ENCODE measurements at regions of chr14 and their contacts with region 1.

Region 1: DNA sequence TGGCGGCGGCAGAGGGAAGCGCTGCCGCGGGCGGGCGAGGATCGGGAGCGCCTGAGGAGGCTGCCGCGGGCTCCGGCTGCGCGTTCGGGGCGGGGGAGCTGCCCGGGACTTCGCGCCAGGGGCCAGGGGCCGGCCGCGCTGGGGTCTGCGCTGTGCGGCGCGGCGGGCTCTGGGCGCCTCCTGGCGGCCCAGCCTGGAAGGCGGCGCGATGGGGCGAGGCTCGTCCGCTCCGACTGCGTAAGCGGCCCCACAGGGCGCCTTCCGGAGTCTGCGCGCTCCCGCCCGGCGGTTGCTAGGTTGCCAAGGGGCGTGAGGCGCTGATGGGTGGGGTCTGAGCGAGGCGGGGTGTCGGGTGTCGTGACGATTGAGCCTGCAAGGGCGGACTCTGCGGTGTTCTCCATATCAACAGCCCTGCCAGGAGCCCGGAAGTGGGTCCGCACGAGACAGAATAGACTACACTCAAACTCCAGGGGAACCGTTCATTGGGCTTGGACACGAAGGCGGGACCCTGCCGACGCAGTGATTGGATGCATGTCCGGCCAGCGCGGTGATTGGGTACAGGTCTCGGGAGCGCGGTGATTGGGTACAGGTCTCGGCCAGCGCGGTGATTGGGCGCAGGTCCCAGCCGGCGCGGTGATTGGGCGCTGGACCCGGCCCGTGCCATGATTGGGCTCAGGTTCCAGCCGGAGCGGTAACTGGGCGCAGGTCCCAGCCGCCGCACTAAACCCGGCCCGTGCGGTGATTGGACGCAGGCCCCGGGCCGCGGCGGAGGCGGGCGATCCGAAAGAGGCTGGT is at the start of gene TEDC1:
- DNase-seq: peak; percentile 98 to 100 (median 98)
- ATAC-seq: peak; percentile 66
- H3K4me3 ChIP-seq: peak within 1 kb of the TSS; percentile 97
- H3K4me3 Mint-ChIP-seq: peak within 1 kb of the TSS; percentile 89
- H3K27ac ChIP-seq: peak within 1 kb of the TSS; percentile 88 to 95
- H3K27ac Mint-ChIP-seq: peak within 1 kb of the TSS; percentile 97
- H3K4me1 ChIP-seq: peaks cover 51% of the 10 kb centered on the region
- H3K4me1 Mint-ChIP-seq: peaks cover 21% of the 10 kb centered on the region
- H3K27me3 ChIP-seq: no peaks in the 10 kb centered on the region
- H3K27me3 Mint-ChIP-seq: no peaks in the 10 kb centered on the region
- CTCF ChIP-seq: peak; percentile 61
- total RNA-seq, gene TEDC1: 102 to 108 TPM

Region 2: GRCh38 chr14:105065280-105066228 is 425.2 kb before region 1 on chr14 and contains the start of gene GPR132:
- CTCF ChIA-PET with region 1: no interaction called
- POLR2A ChIA-PET with region 1: interaction called, 8 read pairs
- intact Hi-C with region 1: loop called in 1 of 2 experiments (anchors 5 kb)
- DNase-seq: peak; percentile 81 to 99 (median 86)
- ATAC-seq: peak; percentile 87
- H3K4me3 ChIP-seq: peak within 1 kb of the TSS; percentile 82
- H3K4me3 Mint-ChIP-seq: peak within 1 kb of the TSS; percentile 100
- H3K27ac ChIP-seq: peak within 1 kb of the TSS; percentile 94 to 95
- H3K27ac Mint-ChIP-seq: peak within 1 kb of the TSS; percentile 91
- H3K4me1 ChIP-seq: peaks cover 98% of the 10 kb centered on the region
- H3K4me1 Mint-ChIP-seq: peaks cover 72% of the 10 kb centered on the region
- H3K27me3 ChIP-seq: no peaks in the 10 kb centered on the region
- H3K27me3 Mint-ChIP-seq: no peaks in the 10 kb centered on the region
- CTCF ChIP-seq: no peak
- total RNA-seq, gene GPR132: 64.4 to 66.7 TPM

Region 3: GRCh38 chr14:105314287-105315200 is 176.2 kb before region 1 on chr14 and contains the start of gene PACS2:
- CTCF ChIA-PET with region 1: interaction called, 4 read pairs
- POLR2A ChIA-PET with region 1: interaction called, 12 read pairs
- intact Hi-C with region 1: loop called in 1 of 2 experiments (anchors 2 kb)
- DNase-seq: peak; percentile 43 to 97 (median 77)
- ATAC-seq: peak; percentile 69
- H3K4me3 ChIP-seq: peak within 1 kb of the TSS; percentile 61
- H3K4me3 Mint-ChIP-seq: peak within 1 kb of the TSS; percentile 95
- H3K27ac ChIP-seq: peak within 1 kb of the TSS in 1 of 2 donors; percentile 31
- H3K27ac Mint-ChIP-seq: peak within 1 kb of the TSS; percentile 88
- H3K4me1 ChIP-seq: peaks cover 27% of the 10 kb centered on the region
- H3K4me1 Mint-ChIP-seq: peaks cover 22% of the 10 kb centered on the region
- H3K27me3 ChIP-seq: no peaks in the 10 kb centered on the region
- H3K27me3 Mint-ChIP-seq: no peaks in the 10 kb centered on the region
- CTCF ChIP-seq: no peak
- total RNA-seq, gene PACS2: 57.7 to 61.5 TPM

Region 4: DNA sequence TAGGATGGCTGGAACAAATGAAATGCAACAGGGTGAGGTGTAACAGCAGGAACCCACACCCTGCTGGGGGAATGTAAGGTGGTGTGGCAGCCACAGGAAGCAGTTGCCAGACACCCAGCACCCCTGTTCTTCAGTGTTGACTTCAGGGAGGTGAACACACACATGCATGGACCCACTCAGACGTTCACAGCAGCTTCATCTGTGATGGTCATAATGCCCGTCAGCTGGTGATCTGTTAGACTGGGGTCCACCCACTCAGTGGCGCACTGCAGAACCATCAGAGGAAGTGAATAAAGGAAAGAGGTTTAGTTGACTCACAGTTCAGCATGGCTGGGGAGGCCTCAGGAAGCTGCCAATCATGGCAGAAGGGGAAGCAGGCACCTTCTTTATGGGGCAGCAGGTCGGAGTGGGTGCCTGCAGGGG is 115.1 kb before region 1 on chr14:
- CTCF ChIA-PET with region 1: interaction called, 40 read pairs
- POLR2A ChIA-PET with region 1: interaction called, 30 read pairs
- intact Hi-C with region 1: loop called in 1 of 2 experiments (anchors 1 kb)
- DNase-seq: peak in 4 of 14 experiments; percentile 8 to 53 (median 34)
- ATAC-seq: peak; percentile 16
- H3K4me3 ChIP-seq: no peak overlapping the region
- H3K4me3 Mint-ChIP-seq: no peak overlapping the region
- H3K27ac ChIP-seq: no peak overlapping the region
- H3K27ac Mint-ChIP-seq: no peak overlapping the region
- H3K4me1 ChIP-seq: peaks cover 14% of the 10 kb centered on the region
- H3K4me1 Mint-ChIP-seq: peaks cover 14% of the 10 kb centered on the region
- H3K27me3 ChIP-seq: no peaks in the 10 kb centered on the region
- H3K27me3 Mint-ChIP-seq: no peaks in the 10 kb centered on the region
- CTCF ChIP-seq: no peak

Region 5: GRCh38 chr14:105414456-105415371 is 76.1 kb before region 1 on chr14:
- CTCF ChIA-PET with region 1: interaction called, 5 read pairs
- POLR2A ChIA-PET with region 1: interaction called, 4 read pairs
- intact Hi-C with region 1: loop called in 1 of 2 experiments (anchors 1 kb)
- DNase-seq: peak in 13 of 14 experiments; percentile 22 to 83 (median 50)
- ATAC-seq: peak; percentile 83
- H3K4me3 ChIP-seq: peak overlapping the region; percentile 30
- H3K4me3 Mint-ChIP-seq: peak overlapping the region; percentile 83
- H3K27ac ChIP-seq: no peak overlapping the region
- H3K27ac Mint-ChIP-seq: no peak overlapping the region
- H3K4me1 ChIP-seq: peaks cover 36% of the 10 kb centered on the region
- H3K4me1 Mint-ChIP-seq: peaks cover 23% of the 10 kb centered on the region
- H3K27me3 ChIP-seq: peaks cover 23 to 30% of the 10 kb centered on the region in 2 experiments
- H3K27me3 Mint-ChIP-seq: peaks cover 11% of the 10 kb centered on the region
- CTCF ChIP-seq: peak; percentile 82

Region 6: GRCh38 chr14:105473677-105474482 is 16.9 kb before region 1 on chr14:
- CTCF ChIA-PET with region 1: interaction called, 28 read pairs
- POLR2A ChIA-PET with region 1: interaction called, 154 read pairs
- intact Hi-C with region 1: no loop called
- DNase-seq: peak; percentile 53 to 87 (median 80)
- ATAC-seq: peak; percentile 66
- H3K4me3 ChIP-seq: peak overlapping the region; percentile 59
- H3K4me3 Mint-ChIP-seq: peak overlapping the region; percentile 82
- H3K27ac ChIP-seq: no peak overlapping the region
- H3K27ac Mint-ChIP-seq: peak overlapping the region; percentile 42
- H3K4me1 ChIP-seq: peaks cover 56% of the 10 kb centered on the region
- H3K4me1 Mint-ChIP-seq: peaks cover 16% of the 10 kb centered on the region
- H3K27me3 ChIP-seq: peaks cover 10% of the 10 kb centered on the region in 2 experiments
- H3K27me3 Mint-ChIP-seq: no peaks in the 10 kb centered on the region
- CTCF ChIP-seq: no peak

Region 7: DNA sequence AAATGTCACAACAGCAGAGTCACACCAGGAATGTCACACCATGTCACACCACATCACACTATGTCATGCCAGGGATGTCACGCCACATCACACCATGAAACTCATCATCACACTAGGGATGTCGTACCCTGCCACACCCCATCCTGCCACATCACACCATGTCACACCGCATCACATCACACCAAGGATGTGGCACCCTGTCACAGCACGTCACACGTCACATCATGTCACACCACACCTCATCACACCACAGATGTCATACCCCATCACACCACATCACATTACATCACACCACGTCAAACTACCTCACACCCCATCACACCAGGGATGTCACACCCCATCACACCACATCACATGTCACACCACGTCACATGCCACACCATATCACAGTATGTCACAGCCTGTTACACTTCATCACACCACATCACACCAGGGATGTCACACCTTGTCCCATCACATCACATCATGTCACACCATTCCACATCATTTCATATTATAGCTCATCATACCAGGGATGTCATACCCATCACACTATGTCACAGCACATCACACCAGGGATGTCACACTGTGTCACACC is 126.5 kb after region 1 on chr14:
- CTCF ChIA-PET with region 1: no interaction called
- POLR2A ChIA-PET with region 1: no interaction called
- intact Hi-C with region 1: no loop called
- DNase-seq: no peak
- ATAC-seq: no peak
- H3K4me3 ChIP-seq: no peak overlapping the region
- H3K4me3 Mint-ChIP-seq: no peak overlapping the region
- H3K27ac ChIP-seq: no peak overlapping the region
- H3K27ac Mint-ChIP-seq: no peak overlapping the region
- H3K4me1 ChIP-seq: no peaks in the 10 kb centered on the region
- H3K4me1 Mint-ChIP-seq: no peaks in the 10 kb centered on the region
- H3K27me3 ChIP-seq: no peaks in the 10 kb centered on the region
- H3K27me3 Mint-ChIP-seq: peaks cover 9% of the 10 kb centered on the region
- CTCF ChIP-seq: no peak

Measured in CD4-positive, alpha-beta T cell (primary cell).